CD4-positive, alpha-beta memory T cell (primary cell): ENCODE measurements at regions of chr2 and their contacts with region 1.

Region 1: GRCh38 chr2:72973566-72974435 is 56.5 kb downstream of the EMX1 start:
- DNase-seq: peak; percentile 9 to 40 (median 20)
- H3K4me3 ChIP-seq: no peak overlapping the region
- H3K4me3 Mint-ChIP-seq: no peak overlapping the region
- H3K27ac ChIP-seq: no peak overlapping the region
- H3K27ac Mint-ChIP-seq: no peak overlapping the region
- H3K4me1 ChIP-seq: no peaks in the 10 kb centered on the region
- H3K4me1 Mint-ChIP-seq: peaks cover 0 to 6% (median under 1%) of the 10 kb centered on the region in 4 donors
- H3K27me3 ChIP-seq: no peaks in the 10 kb centered on the region
- H3K27me3 Mint-ChIP-seq: peaks cover 2% of the 10 kb centered on the region in 2 donors

Region 2: DNA sequence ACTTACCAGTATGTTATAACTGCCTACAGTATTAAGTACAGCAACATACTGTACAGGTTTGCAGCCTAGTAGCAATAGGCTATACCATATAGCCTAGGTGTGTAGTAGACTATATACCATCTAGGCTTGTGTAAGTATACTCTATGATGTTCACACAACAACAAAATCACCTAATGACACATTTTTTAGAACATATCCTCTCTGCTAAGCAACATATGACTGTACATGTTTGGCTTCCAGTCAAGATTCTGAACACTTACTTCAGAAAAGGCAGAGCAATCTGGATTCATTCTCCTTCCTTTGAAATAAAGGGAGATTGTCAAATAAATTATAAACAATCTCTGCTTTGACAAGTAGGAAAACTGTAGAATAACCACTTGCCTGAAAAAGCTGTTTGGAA is 229.8 kb before region 1 on chr2:
- CTCF ChIA-PET with region 1: no interaction called
- POLR2A ChIA-PET with region 1: no interaction called
- intact Hi-C with region 1: no loop called
- DNase-seq: no peak
- H3K4me3 ChIP-seq: no peak overlapping the region
- H3K4me3 Mint-ChIP-seq: no peak overlapping the region
- H3K27ac ChIP-seq: no peak overlapping the region
- H3K27ac Mint-ChIP-seq: no peak overlapping the region
- H3K4me1 ChIP-seq: no peaks in the 10 kb centered on the region
- H3K4me1 Mint-ChIP-seq: peaks cover 0 to 1% (median 0%) of the 10 kb centered on the region in 4 donors
- H3K27me3 ChIP-seq: no peaks in the 10 kb centered on the region
- H3K27me3 Mint-ChIP-seq: no peaks in the 10 kb centered on the region

Region 3: DNA sequence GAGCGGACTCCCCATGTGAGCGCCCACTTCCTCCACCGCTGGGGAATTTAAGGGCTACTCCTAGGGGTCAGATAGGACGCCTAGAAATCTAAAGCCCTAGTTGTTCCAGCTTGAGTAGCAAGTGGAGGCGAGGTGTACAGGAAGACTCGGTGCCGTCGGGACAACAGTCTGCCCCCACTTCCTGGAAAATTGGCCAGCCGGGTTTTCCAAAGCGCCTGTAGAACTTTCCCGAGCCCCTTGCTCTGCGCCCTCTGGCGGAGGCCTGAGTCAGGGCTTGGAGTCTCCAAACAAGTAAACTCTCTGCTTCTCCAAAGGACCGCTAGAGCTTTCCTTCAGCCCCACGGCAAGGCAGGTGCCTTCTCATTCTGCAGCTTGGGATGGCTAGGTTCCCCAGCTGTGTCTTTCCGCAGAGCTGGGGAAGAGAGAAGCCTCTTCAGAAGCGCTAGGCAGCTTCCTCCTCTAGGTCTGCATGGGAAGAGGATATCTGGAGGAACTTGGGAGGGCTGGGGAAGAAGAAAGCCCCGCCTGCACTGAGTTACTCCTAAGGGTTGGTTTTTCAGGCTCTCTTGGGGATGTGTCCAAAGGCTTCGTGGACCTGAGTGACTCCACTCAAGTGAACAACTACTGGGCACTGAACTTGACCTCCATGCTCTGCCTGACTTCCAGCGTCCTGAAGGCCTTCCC is 85.9 kb before region 1 on chr2:
- CTCF ChIA-PET with region 1: interaction called, 35 read pairs
- POLR2A ChIA-PET with region 1: no interaction called
- intact Hi-C with region 1: no loop called
- DNase-seq: peak in 4 of 5 donors; percentile 13 to 38 (median 32)
- H3K4me3 ChIP-seq: peak overlapping the region; percentile 36 to 51
- H3K4me3 Mint-ChIP-seq: peak overlapping the region; percentile 67 to 85 (median 80)
- H3K27ac ChIP-seq: no peak overlapping the region
- H3K27ac Mint-ChIP-seq: no peak overlapping the region
- H3K4me1 ChIP-seq: peaks cover 7% of the 10 kb centered on the region
- H3K4me1 Mint-ChIP-seq: peaks cover 3 to 10% (median 6%) of the 10 kb centered on the region in 4 donors
- H3K27me3 ChIP-seq: peaks cover 30% of the 10 kb centered on the region
- H3K27me3 Mint-ChIP-seq: peaks cover 33 to 54% of the 10 kb centered on the region in 2 donors